ENCODE measurements at regions of chr11 and their contacts with region 1.

Region 1: DNA sequence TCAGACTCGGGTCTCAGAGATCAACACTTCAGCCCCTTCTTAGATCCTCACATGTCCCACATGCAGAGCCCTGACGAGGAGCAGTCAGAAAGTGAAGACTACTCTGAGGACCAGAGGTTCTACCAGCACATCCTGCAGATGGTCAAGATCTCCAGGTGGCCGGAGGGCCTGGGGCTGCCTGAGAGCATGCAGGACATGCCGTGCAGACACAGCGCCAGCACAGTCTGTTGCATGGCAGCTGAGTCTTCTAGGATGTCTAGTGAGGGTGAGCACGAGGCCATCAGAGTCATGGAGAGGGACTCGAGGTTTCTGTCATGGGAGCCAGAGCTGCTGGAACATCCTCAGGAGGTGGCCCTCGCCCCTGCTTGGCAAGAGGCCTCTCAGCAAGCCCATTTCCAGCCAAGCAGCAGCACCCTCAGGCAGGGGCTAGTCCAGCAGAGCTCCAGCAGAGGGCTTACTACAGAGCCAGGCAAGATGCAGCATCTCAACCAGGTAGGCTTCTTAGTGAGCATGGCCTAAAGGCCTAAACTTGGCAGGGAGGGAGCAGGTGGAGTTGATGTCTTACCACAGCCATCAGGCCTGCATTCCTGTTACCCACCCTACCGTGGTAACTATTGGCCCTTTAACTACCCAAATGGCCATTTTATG is 28.6 kb downstream of the CEP164 start:
- DNase-seq: no peak
- ATAC-seq: peak in 1 of 8 donors; percentile 41
- H3K4me3 ChIP-seq: no peak overlapping the region
- H3K27ac ChIP-seq: no peak overlapping the region
- H3K4me1 ChIP-seq: no peaks in the 10 kb centered on the region
- H3K27me3 ChIP-seq: no peaks in the 10 kb centered on the region
- CTCF ChIP-seq: no peak

Region 2: DNA sequence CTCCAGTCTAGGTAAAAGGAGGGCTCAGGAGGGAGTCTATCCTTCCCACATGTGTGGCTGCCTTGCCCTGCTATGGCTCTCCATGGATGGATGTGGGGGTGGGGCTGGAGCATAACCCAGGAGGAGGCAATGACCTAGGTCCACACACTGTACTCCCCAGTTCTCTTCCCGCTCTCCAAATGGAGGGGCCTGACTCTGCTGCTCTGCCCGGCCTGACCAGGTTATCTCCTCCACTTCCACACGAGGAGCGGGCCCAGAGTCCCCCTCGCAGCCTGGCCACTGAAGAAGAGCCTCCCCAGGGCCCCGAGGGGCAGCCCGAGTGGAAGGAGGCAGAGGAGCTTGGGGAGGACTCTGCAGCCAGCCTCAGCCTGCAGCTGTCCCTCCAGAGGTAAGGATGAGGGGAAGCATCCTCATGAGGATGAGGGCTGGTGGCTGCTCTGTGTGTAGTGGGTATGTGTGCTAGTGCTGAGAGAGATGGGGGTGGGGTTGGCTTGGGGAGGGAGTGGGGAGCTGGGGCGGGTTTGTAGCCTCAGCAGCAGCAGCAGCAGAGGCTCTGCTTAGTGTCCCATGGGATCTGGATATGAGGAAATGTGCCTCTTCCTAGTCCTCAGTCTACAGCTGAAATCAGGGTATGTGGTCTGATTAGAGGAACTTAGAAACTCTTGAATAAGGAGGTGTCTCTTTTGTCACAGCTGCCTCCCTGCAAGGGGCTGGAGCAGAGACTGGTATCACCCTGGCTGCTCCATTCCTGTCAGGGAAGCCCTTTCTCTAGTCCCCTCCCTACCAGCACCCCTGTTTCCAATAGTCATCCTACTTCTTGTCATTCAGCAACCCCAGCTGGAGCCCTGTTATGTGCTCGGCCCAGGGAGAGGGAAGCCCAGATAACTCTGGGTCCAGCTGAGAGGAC is 25.5 kb after region 1 on chr11:
- intact Hi-C with region 1: loop called in 1 of 10 experiments (anchors 1 kb)
- DNase-seq: no peak
- ATAC-seq: no peak
- H3K4me3 ChIP-seq: no peak overlapping the region
- H3K27ac ChIP-seq: no peak overlapping the region
- H3K4me1 ChIP-seq: peaks cover 5 to 28% (median 11%) of the 10 kb centered on the region in 9 donors
- H3K27me3 ChIP-seq: no peaks in the 10 kb centered on the region
- CTCF ChIP-seq: no peak